ENCODE measurements at regions of chr3 and their contacts with region 1.

Region 1: GRCh38 chr3:152268555-152269425 is at the start of gene MBNL1:
- DNase-seq: peak; percentile 78
- H3K4me3 ChIP-seq: peak within 1 kb of the TSS; percentile 62 to 87 (median 66)
- H3K27ac ChIP-seq: peak within 1 kb of the TSS; percentile 90
- H3K4me1 ChIP-seq: peaks cover 33% of the 10 kb centered on the region
- H3K27me3 ChIP-seq: no peaks in the 10 kb centered on the region
- CTCF ChIP-seq: no peak
- total RNA-seq, gene MBNL1: 107 to 188 TPM

Region 2: DNA sequence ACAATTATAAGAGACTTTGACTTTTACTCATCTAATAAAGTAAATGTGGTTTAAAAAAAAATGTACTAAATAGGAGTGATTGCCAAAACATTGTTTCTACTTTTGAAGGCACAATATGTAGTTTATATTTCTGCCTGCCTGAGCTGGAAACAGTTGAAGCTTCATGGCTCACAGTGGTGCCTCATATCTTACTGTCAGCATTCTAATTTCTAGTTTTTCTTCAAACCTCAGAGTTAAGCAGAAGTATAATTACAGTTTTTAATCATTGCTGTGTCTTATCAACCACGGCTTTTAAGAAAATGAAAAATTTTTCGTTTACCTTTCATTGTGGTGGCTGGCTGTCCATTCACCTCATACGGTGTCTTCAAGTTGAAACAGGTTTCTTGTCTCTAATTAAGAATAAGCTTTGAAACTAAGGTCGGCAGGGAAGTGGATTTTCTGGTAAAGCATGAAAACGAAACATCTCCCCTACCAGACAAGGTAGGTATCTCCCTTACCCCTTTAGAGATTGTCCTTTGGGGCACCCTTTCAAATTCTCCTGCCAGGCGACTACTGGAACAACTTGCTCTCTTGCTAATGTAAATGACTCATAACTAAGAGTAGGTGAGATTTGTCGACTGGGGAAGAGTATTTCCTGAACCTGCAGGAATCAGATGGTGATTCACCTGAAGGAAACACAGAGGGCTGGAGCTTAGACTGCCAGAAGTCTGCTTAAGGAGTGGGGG is 952.4 kb before region 1 on chr3 and contains the start of gene GPR87:
- CTCF ChIA-PET with region 1: no interaction called
- dilution Hi-C with region 1: no loop called
- in situ Hi-C with region 1: no loop called
- intact Hi-C with region 1: loop called (anchors 10 kb)
- DNase-seq: peak; percentile 95
- H3K4me3 ChIP-seq: peak within 1 kb of the TSS; percentile 63 to 91 (median 89)
- H3K27ac ChIP-seq: peak within 1 kb of the TSS; percentile 99
- H3K4me1 ChIP-seq: peaks cover 64% of the 10 kb centered on the region
- H3K27me3 ChIP-seq: no peaks in the 10 kb centered on the region
- CTCF ChIP-seq: no peak
- total RNA-seq, gene GPR87: 66.1 to 78.7 TPM

Region 3: GRCh38 chr3:152071924-152072323 is 196.9 kb before region 1 on chr3:
- CTCF ChIA-PET with region 1: no interaction called
- dilution Hi-C with region 1: no loop called
- in situ Hi-C with region 1: loop called in 1 of 2 experiments (anchors 25 kb)
- intact Hi-C with region 1: loop called (anchors 1 kb)
- DNase-seq: peak; percentile 45
- H3K4me3 ChIP-seq: no peak overlapping the region
- H3K27ac ChIP-seq: no peak overlapping the region
- H3K4me1 ChIP-seq: peaks cover 3% of the 10 kb centered on the region
- H3K27me3 ChIP-seq: no peaks in the 10 kb centered on the region
- CTCF ChIP-seq: peak; percentile 51 to 67

Region 4: DNA sequence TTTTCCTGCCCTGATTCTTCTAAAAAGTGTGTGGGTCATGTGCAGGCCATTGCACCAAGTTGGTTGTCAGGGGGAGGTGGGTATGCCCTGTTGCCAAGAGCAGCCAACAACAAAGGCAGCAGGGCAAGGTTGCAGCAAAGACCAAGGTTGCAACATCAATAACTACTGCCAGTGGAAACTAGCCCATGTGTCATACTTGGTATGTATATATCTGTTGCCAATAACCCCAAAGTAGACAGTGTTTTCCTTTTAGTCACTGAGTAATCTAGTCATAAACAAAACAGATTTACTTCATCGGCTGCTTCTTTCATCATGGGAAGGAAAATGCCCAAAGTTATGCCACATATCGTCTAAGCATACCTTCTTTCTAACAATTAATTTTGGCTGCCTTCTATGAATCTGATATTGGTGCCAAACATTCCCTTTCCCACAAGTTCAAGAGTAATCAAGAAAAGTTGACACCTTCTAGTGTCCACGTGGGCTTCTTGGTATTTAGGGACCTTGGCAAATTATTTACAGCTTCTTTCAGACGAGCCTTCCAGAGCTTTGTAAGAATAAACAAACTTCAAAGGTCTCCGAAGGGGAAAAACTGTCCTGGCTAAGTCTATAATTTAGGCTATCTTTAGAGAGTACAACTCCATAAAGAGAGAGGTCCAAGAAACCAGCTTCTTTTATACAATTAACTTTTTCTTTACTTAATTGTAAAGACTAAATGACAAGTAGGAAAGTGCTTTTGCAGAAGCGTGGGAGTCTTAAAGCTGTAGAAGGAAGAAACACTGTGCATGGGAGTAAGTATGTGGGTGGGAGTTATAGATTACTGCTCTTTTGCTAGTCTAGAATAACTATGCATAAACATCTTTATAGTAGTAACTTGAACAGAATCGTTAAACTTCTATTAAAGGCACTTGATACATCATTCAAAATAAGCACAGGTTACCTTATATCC is 10.1 kb before region 1 on chr3:
- CTCF ChIA-PET with region 1: no interaction called
- dilution Hi-C with region 1: no loop called
- in situ Hi-C with region 1: no loop called
- intact Hi-C with region 1: loop called (anchors 1 kb)
- DNase-seq: peak; percentile 98
- H3K4me3 ChIP-seq: no peak overlapping the region
- H3K27ac ChIP-seq: peak overlapping the region; percentile 76
- H3K4me1 ChIP-seq: peaks cover 14% of the 10 kb centered on the region
- H3K27me3 ChIP-seq: no peaks in the 10 kb centered on the region
- CTCF ChIP-seq: no peak

Region 5: DNA sequence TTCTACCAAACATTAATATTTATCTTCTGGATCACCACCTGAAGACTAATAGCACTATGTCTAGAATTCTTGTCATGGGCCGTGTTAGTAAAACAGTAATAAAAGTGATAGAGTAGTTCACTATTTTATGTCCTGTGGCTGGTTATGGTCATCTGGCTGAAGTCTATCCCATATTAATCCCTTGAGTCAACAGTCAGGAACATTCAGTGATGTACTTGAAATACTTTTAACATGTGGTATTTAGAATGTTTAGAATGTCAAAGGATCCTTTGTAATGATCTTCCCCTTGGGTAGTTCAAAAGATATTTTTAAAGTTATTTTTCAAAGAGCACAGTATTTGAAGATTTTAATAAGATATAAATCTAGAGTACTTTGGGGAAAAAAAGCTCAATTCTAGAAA is 117.0 kb after region 1 on chr3:
- CTCF ChIA-PET with region 1: no interaction called
- dilution Hi-C with region 1: no loop called
- in situ Hi-C with region 1: no loop called
- intact Hi-C with region 1: loop called (anchors 5 kb)
- DNase-seq: peak; percentile 41
- H3K4me3 ChIP-seq: no peak overlapping the region
- H3K27ac ChIP-seq: peak overlapping the region; percentile 63
- H3K4me1 ChIP-seq: peaks cover 34% of the 10 kb centered on the region
- H3K27me3 ChIP-seq: no peaks in the 10 kb centered on the region
- CTCF ChIP-seq: no peak

Measured in mammary epithelial cell (primary cell).